AG04450 (cell line): ENCODE measurements at regions of chr1 and their contacts with region 1.

Region 1: DNA sequence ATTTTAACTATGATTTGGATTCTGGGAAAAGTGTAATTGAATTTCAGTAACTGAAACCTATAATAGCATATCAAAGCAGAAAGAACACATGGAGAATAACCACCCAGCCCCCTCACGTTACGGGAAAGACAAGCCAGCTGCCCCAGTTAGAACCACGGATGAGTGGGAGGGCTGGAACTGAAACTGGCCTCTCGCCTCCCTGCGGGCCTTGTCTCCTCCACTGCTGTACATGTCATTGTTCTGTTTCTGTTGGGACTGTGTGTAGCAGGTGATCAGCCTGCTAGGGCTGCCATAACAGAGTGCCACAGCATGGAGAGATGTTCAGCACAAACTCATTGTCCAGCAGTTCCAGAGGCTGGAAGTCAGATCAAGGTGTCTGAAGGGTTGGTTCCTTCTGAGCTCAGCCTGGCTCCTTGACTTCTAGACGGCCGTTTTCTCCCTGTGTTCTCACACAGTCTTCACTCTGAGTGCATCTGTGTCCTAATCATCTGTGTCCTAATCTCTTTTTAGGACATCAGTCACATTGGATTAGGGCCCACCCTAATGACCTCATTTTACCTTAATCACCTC is 52.4 kb downstream of the MAP3K21 start:
- DNase-seq: no peak
- H3K4me3 ChIP-seq: no peak overlapping the region
- H3K27ac ChIP-seq: no peak overlapping the region
- H3K27me3 ChIP-seq: no peaks in the 10 kb centered on the region
- CTCF ChIP-seq: no peak

Region 2: GRCh38 chr1:233005703-233006102 is 374.3 kb before region 1 on chr1:
- CTCF ChIA-PET with region 1: no interaction called
- POLR2A ChIA-PET with region 1: no interaction called
- DNase-seq: peak; percentile 57
- H3K4me3 ChIP-seq: no peak overlapping the region
- H3K27ac ChIP-seq: peak overlapping the region; percentile 61
- H3K27me3 ChIP-seq: no peaks in the 10 kb centered on the region
- CTCF ChIP-seq: no peak

Region 3: DNA sequence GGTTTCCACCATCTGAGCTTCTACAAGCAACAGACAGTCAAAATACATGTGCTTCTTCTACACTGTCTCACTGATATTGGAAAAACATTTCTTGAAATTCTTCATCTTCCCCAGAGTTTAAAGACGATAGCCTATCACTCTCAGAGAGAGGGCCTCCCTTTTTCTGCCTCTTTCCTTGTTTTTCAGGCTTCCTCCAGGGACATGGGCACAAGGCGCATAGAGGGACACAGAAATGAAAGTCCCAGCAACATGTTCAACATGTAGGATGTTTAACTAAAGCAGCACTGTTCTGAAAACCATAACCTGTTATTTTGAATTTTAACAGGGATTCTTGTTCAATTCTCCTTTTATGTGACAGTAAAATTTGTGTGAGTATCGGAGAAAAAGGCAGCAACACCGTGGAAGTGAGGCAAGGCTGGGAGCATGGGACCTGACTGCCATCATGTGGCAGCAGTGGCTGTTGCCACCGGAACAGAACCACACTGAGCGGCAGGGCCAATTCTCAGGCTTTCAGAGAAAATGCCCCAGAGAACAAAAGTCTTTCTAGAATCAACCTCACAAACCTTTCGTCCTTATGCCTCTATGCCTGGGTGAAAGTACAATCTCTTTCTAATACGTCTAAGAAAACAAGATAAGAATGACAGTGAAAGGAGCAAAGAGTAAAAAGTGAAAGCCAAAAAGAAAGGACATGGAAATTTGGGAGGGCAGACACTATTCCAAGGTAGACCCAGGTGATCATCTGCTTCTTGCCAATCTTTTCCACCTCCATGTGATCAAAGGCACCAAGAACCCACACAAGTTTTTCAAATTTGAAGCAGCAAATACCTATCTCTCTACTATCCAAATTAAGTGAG is 138.9 kb before region 1 on chr1:
- CTCF ChIA-PET with region 1: no interaction called
- POLR2A ChIA-PET with region 1: no interaction called
- DNase-seq: no peak
- H3K4me3 ChIP-seq: no peak overlapping the region
- H3K27ac ChIP-seq: no peak overlapping the region
- H3K27me3 ChIP-seq: no peaks in the 10 kb centered on the region
- CTCF ChIP-seq: peak; percentile 79

Region 4: DNA sequence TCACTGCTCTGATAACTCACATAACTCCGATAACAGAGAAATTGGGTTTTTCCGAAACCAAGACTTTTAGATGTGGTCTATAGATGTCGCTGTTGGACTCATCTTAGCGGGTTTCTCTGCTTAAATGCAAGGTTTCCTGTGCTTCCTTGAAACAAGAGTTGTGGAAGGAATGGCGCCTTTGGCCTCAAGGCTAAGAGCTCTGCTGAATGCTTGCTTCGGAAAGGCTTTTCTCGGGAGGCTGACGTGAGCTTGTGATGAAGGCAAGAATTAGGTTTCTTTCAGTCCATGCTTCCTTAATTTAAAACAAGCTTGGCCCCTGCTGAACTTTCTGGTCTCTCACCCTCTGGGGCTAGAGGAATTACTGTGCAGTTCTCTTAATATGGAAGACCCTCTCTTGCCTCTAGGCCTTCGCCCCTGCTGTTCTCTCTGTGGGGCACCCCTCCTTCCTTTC is 61.0 kb after region 1 on chr1:
- CTCF ChIA-PET with region 1: interaction called, 10 read pairs
- POLR2A ChIA-PET with region 1: no interaction called
- DNase-seq: no peak
- H3K4me3 ChIP-seq: no peak overlapping the region
- H3K27ac ChIP-seq: no peak overlapping the region
- H3K27me3 ChIP-seq: no peaks in the 10 kb centered on the region
- CTCF ChIP-seq: peak; percentile 55